GM23248 (cell line): ENCODE measurements at regions of chr12 and their contacts with region 1.

Region 1: GRCh38 chr12:43282106-43282505 is 269.9 kb downstream of the ADAMTS20 start:
- DNase-seq: peak; percentile 63
- H3K4me3 ChIP-seq: no peak overlapping the region
- H3K27ac ChIP-seq: no peak overlapping the region
- H3K4me1 ChIP-seq: peaks cover 63% of the 10 kb centered on the region
- H3K27me3 ChIP-seq: no peaks in the 10 kb centered on the region

Region 2: GRCh38 chr12:42144408-42145196 is 1137.5 kb before region 1 on chr12 and contains the start of gene GXYLT1:
- in situ Hi-C with region 1: loop called (anchors 25 kb)
- DNase-seq: peak; percentile 97
- H3K4me3 ChIP-seq: peak within 1 kb of the TSS; percentile 82
- H3K27ac ChIP-seq: peak within 1 kb of the TSS; percentile 23; the same call in 1 of the 2 replicates
- H3K4me1 ChIP-seq: peaks cover 29% of the 10 kb centered on the region
- H3K27me3 ChIP-seq: no peaks in the 10 kb centered on the region
- total RNA-seq, gene GXYLT1: 14.6 and 16.6 TPM in 2 replicates

Region 3: DNA sequence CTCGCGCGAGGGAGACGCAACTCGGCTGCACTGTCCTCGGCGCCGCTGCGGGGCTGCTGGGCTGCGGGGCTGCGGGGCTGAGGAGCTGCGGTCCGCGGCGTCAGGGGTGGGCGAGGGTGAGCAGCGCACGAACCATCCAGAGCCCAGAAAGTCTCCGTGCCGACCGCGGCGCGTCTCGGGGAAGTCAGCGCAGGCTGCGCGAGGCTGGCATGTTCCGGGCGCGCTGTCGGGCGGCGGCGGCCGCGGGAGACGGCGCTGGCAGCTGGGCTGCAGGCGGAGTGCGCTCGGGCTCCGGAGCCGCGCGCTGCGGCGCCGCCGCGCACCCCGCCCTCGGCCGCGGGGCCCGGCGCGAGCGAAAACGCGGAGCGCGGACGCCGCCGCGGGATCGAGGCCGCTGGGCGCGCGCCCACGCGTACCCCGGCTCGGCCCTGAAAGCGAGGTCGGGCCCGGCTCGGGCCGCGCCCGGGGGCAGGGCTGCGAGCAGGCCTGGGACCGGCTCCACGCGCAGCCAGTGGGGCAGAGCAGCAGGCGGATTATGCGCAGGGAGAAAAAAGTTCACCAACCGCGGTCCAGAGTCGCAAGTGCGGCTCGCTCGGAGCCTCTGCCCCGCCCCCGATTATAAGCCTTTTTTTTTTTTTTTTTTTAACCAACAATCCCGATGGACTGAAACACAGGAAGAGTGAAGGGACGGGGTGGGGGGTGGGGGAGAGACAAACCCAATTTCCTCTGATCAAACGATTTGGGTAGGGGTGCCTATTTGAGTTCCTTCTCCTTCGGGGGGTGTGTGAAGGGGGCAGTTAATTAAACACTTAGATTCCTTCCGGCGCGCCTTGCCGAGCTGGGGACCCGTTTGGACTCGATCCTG is 692.4 kb before region 1 on chr12 and contains the start of gene PRICKLE1:
- in situ Hi-C with region 1: loop called (anchors 5 kb)
- DNase-seq: peak; percentile 86
- H3K4me3 ChIP-seq: peak within 1 kb of the TSS; percentile 87
- H3K27ac ChIP-seq: no peak within 1 kb of the TSS; the same call in 1 of the 2 replicates
- H3K4me1 ChIP-seq: peaks cover 35% of the 10 kb centered on the region
- H3K27me3 ChIP-seq: no peaks in the 10 kb centered on the region
- total RNA-seq, gene PRICKLE1: 12.9 and 13.2 TPM in 2 replicates

Region 4: GRCh38 chr12:43436597-43436996 is 154.5 kb after region 1 on chr12:
- in situ Hi-C with region 1: no loop called
- DNase-seq: no peak
- H3K4me3 ChIP-seq: no peak overlapping the region
- H3K27ac ChIP-seq: no peak overlapping the region
- H3K4me1 ChIP-seq: no peaks in the 10 kb centered on the region
- H3K27me3 ChIP-seq: peaks cover 14% of the 10 kb centered on the region; the same call in 1 of the 2 replicates

Region 5: DNA sequence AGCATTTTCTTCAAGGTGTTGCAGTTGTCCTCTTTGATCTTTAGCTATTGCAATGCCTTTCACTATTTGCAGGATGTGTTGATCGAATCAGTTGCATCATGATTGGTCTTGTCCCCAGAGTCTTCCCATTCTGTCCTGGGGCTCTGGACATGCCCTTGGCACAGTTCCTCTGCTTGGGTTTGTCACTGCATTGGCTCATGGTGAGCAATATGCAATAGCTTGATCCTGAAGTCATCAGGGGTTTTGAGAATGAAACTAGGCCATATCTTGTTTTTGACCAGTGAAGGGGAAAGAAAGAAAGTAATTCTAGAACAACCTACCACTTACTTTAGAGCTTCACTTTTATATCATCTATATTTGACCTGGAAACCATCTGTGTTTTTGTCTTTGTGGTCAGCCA is 835.3 kb after region 1 on chr12:
- in situ Hi-C with region 1: no loop called
- DNase-seq: peak; percentile 53
- H3K4me3 ChIP-seq: no peak overlapping the region
- H3K27ac ChIP-seq: no peak overlapping the region
- H3K4me1 ChIP-seq: 0 out of 2 replicates have a peak, but pooled peaks cover 5% of the 10 kb centered on the region
- H3K27me3 ChIP-seq: no peaks in the 10 kb centered on the region